ENCODE measurements at regions of chr21 and their contacts with region 1.

Region 1: GRCh38 chr21:26177187-26177586 is 6.6 kb upstream of the APP start:
- DNase-seq: no peak
- H3K4me3 ChIP-seq: no peak overlapping the region
- H3K27ac ChIP-seq: no peak overlapping the region
- H3K4me1 ChIP-seq: no peaks in the 10 kb centered on the region
- H3K27me3 ChIP-seq: no peaks in the 10 kb centered on the region
- CTCF ChIP-seq: no peak
- EP300 ChIP-seq: no peak
- POLR2A ChIP-seq: no peak

Region 2: GRCh38 chr21:24545807-24546361 is 1631.3 kb before region 1 on chr21:
- in situ Hi-C with region 1: no loop called
- intact Hi-C with region 1: no loop called
- DNase-seq: no peak
- H3K4me3 ChIP-seq: no peak overlapping the region
- H3K27ac ChIP-seq: no peak overlapping the region
- H3K4me1 ChIP-seq: no peaks in the 10 kb centered on the region
- H3K27me3 ChIP-seq: no peaks in the 10 kb centered on the region
- CTCF ChIP-seq: no peak
- EP300 ChIP-seq: no peak
- POLR2A ChIP-seq: no peak

Region 3: DNA sequence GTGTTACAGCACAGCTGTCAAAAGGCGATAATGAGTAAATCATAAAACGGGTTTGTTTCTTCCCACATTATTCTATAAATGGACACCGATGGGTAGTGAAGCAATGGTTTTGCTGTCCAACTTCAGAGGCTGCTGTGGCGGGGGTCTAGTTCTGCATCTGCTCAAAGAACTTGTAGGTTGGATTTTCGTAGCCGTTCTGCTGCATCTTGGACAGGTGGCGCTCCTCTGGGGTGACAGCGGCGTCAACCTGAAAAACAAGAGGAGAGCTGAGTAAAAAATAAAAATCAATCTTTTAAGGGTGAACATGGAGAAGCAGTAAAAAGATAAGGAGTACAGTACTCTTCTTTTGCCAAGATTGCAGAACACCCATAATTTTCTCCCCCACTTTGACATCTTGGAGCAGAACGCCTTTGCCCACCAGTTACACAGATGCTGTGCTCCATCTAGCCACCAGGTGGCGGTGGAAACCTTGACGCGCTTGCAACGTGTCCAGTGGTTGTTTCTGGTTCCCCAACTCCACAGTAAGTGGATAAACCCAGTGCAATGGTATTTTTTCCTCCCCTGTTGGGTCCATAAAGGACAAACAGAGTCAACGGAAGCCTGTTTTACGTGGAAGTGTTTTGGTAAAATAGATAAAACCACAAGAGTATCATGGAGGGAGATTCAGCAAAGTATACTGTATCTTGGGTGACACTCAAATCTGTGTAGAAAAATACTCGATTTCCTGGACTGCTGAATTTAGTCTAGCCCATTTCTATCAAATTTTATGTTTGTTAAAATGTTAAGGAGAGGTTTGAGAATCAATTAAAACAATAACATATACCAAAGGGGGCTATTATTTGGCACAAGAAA is 295.4 kb before region 1 on chr21:
- in situ Hi-C with region 1: loop called in 3 of 4 experiments (anchors 10 to 25 kb)
- intact Hi-C with region 1: loop called (anchors 1 kb)
- DNase-seq: peak; percentile 69
- H3K4me3 ChIP-seq: no peak overlapping the region
- H3K27ac ChIP-seq: no peak overlapping the region
- H3K4me1 ChIP-seq: peaks cover 0 to 24% (median 11%) of the 10 kb centered on the region in 4 donors
- H3K27me3 ChIP-seq: no peaks in the 10 kb centered on the region
- CTCF ChIP-seq: peak; percentile 84 to 96 (median 90)
- EP300 ChIP-seq: no peak
- POLR2A ChIP-seq: no peak

Region 4: DNA sequence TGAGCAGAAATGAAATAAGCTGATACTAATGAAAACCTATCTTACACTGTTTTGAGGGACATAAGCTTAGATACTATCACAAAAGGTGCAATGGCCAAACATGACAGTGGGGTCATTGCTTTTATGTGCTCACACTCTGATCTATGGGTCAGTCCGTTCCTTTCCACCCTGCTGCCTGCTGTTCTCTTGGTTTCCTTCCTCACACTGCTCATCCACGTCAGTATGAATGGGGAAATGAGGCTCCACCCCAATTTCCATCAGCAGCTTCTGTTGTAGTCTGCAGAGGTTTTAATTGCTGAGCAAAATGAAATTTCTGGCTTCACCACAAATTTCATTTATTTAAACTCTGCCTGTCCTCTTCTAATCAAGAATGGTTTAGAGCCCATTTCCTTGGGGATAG is 287.2 kb before region 1 on chr21:
- in situ Hi-C with region 1: loop called (anchors 5 to 25 kb)
- intact Hi-C with region 1: no loop called
- DNase-seq: no peak
- H3K4me3 ChIP-seq: no peak overlapping the region
- H3K27ac ChIP-seq: peak overlapping the region; percentile 74 to 82 (median 78)
- H3K4me1 ChIP-seq: peaks cover 0 to 59% (median 30%) of the 10 kb centered on the region in 4 donors
- H3K27me3 ChIP-seq: no peaks in the 10 kb centered on the region
- CTCF ChIP-seq: no peak
- EP300 ChIP-seq: no peak
- POLR2A ChIP-seq: no peak